B cell (primary cell): ENCODE measurements at regions of chr11 and their contacts with region 1.

Region 1: GRCh38 chr11:66659763-66660162 is 17.9 kb downstream of the RBM4B start:
- DNase-seq: peak; percentile 62
- ATAC-seq: no peak
- H3K4me3 ChIP-seq: peak overlapping the region in 1 of 5 experiments; percentile 36
- H3K4me3 Mint-ChIP-seq: peak overlapping the region; percentile 78
- H3K27ac ChIP-seq: peak overlapping the region; percentile 65 to 69
- H3K27ac Mint-ChIP-seq: peak overlapping the region; percentile 87
- H3K4me1 ChIP-seq: peaks cover 30 to 34% of the 10 kb centered on the region in 2 donors
- H3K4me1 Mint-ChIP-seq: peaks cover 29% of the 10 kb centered on the region
- H3K27me3 ChIP-seq: no peaks in the 10 kb centered on the region
- H3K27me3 Mint-ChIP-seq: no peaks in the 10 kb centered on the region
- CTCF ChIP-seq: no peak

Region 2: GRCh38 chr11:66607126-66607834 is 52.5 kb before region 1 on chr11:
- CTCF ChIA-PET with region 1: no interaction called
- POLR2A ChIA-PET with region 1: interaction called, 12 read pairs
- intact Hi-C with region 1: no loop called
- DNase-seq: no peak
- ATAC-seq: no peak
- H3K4me3 ChIP-seq: no peak overlapping the region
- H3K4me3 Mint-ChIP-seq: no peak overlapping the region
- H3K27ac ChIP-seq: peak overlapping the region; percentile 9 to 56
- H3K27ac Mint-ChIP-seq: peak overlapping the region; percentile 76
- H3K4me1 ChIP-seq: peaks cover 41 to 56% of the 10 kb centered on the region in 2 donors
- H3K4me1 Mint-ChIP-seq: peaks cover 41% of the 10 kb centered on the region
- H3K27me3 ChIP-seq: no peaks in the 10 kb centered on the region
- H3K27me3 Mint-ChIP-seq: no peaks in the 10 kb centered on the region
- CTCF ChIP-seq: no peak